OCI-LY7 (cell line): ENCODE measurements at regions of chr3 and their contacts with region 1.

Region 1: DNA sequence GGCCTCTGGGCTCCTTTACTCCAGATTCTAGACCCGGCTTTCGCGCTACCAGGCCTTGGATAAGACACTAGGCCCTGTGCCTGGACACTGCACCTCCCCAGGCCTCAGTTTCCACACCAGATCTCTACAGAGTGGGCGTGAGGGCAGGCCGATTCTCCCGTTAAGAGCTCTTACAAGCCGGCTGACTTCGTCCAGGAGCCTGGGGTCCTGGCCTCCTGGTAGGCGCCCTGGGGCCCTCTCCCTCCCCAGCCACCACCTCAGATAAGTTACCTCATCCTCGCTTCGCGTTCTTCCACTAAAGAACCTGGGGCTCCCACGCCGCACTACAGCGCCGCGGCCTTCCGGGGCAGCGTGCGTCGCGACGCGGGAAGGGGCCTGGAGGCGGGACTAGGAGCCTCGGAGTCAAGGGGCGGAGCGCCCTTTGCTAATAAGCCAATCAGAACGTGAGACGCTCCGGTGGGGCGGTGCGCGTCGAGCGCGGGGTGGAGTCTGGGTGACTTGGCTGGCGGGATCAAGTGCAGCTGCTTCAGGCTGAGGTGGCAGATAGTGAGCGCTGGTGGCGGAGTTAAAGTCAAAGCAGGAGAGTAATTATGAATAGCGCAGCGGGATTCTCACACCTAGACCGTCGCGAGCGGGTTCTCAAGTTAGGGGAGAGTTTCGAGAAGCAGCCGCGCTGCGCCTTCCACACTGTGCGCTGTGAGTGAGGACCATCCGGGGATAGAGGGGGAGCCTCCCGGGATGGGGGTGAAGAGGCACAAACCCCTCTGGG is at the starts of genes EAF2 and IQCB1:
- DNase-seq: peak; percentile 98
- H3K4me3 ChIP-seq: peak within 1 kb of the TSS; percentile 93
- H3K27ac ChIP-seq: peak within 1 kb of the TSS; percentile 83
- H3K4me1 ChIP-seq: peaks cover 58% of the 10 kb centered on the region
- CTCF ChIP-seq: peak; percentile 21; the same call in 1 of the 2 replicates
- total RNA-seq, gene EAF2: 66.3 and 78.1 TPM in 2 replicates
- total RNA-seq, gene IQCB1: 77.5 and 108 TPM in 2 replicates

Region 2: DNA sequence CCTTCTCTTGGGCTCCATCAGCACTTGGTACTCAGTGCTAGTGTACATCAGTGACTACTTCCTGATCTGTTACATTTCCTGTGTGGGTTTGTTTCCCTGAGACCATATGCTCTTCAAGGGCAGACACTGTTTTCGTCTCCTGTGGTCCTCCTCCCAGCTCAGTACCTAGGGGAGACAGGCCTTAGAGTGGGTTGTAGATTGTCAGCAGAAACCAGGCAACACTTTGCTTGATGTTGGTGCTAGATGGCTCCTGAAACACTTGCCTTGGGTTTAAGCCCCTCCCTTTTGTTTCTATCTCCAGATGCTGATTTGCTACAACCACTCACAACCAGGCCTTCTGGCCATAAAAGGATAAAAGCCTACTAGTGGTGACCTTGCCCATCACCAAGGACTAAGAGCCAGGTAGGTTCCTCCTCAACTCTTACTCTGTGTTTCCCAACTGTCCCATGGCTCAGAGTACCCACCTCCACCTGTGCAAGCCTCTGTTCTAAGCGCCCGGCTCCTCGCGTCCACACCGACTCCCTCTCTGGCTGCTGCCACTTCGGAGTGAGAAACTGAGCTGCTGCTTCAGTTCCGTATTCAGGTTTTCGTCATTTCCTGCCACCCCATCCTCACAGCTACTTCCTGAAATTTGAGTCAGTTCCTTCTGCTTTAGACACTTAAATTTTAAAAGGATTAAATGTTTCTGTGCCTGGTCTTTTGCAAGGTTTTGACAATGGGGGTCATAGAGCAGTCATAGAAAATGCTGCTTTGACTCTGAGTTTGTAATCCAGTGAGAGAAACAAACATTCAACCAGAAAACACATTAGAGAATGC is 174.3 kb before region 1 on chr3 and contains the start of gene HCLS1:
- CTCF ChIA-PET with region 1: no interaction called
- POLR2A ChIA-PET with region 1: interaction called, 4 read pairs
- intact Hi-C with region 1: loop called (anchors 5 kb)
- DNase-seq: peak; percentile 89
- H3K4me3 ChIP-seq: peak within 1 kb of the TSS; percentile 75
- H3K27ac ChIP-seq: peak within 1 kb of the TSS; percentile 82
- H3K4me1 ChIP-seq: peaks cover 28% of the 10 kb centered on the region
- CTCF ChIP-seq: 0 out of 2 replicates have a peak, but pooled peaks have one; percentile 29
- total RNA-seq, gene HCLS1: 124 and 167 TPM in 2 replicates

Region 3: DNA sequence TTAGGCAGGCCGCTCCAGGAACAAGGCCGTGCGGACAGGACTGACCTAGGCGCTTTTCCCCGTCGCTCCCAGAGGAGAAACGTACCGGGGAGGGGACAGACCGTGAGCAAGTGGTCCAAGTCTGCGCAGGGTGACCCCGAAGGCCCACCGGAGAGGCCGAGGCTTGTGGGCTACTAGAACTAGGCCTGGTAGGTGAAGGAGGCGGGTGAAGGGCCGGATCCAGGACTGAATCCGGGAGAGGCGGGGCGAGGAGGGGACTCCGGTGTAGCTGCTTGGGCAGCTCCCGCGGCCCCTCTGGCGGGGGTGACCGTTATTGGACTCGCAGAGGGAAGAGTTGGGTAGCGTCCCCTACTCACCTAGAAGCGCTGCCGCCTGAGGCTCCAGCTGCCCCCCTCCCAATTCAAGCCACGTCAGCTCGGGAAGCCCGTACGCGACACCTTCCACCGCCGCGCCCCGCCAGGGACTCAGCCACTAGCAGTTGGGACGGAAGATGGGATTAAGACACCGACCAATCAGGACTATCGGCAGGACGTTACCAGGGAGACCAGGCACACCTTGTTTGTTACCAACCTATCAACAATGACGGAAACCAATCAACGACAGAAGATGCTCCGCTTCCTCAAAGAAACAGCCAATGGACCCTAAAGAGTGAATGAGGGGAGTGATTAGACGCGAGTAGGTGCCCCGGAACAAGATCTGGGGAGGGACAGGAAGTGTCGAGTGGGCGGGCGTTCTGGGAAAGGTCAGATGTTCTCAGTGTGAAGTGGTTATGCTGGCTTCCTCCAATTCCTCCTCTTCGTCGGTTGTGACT is 85.4 kb before region 1 on chr3 and contains the start of gene GOLGB1:
- CTCF ChIA-PET with region 1: no interaction called
- POLR2A ChIA-PET with region 1: interaction called, 4 read pairs
- intact Hi-C with region 1: loop called (anchors 2 kb)
- DNase-seq: peak; percentile 99
- H3K4me3 ChIP-seq: peak within 1 kb of the TSS; percentile 79
- H3K27ac ChIP-seq: peak within 1 kb of the TSS; percentile 19
- H3K4me1 ChIP-seq: peaks cover 20% of the 10 kb centered on the region
- CTCF ChIP-seq: no peak
- total RNA-seq, gene GOLGB1: 11.5 and 15.4 TPM in 2 replicates

Region 4: GRCh38 chr3:121793078-121793477 is 41.8 kb before region 1 on chr3:
- CTCF ChIA-PET with region 1: no interaction called
- POLR2A ChIA-PET with region 1: interaction called, 46 read pairs
- intact Hi-C with region 1: loop called (anchors 1 kb)
- DNase-seq: peak; percentile 21
- H3K4me3 ChIP-seq: peak overlapping the region; percentile 49
- H3K27ac ChIP-seq: peak overlapping the region; percentile 91
- H3K4me1 ChIP-seq: peaks cover 55% of the 10 kb centered on the region
- CTCF ChIP-seq: no peak

Region 5: GRCh38 chr3:121809249-121809648 is 25.6 kb before region 1 on chr3:
- CTCF ChIA-PET with region 1: no interaction called
- POLR2A ChIA-PET with region 1: interaction called, 110 read pairs
- intact Hi-C with region 1: no loop called
- DNase-seq: peak; percentile 77
- H3K4me3 ChIP-seq: peak overlapping the region; percentile 50
- H3K27ac ChIP-seq: peak overlapping the region; percentile 92
- H3K4me1 ChIP-seq: peaks cover 53% of the 10 kb centered on the region
- CTCF ChIP-seq: no peak

Region 6: GRCh38 chr3:121817753-121818152 is 17.1 kb before region 1 on chr3:
- CTCF ChIA-PET with region 1: no interaction called
- POLR2A ChIA-PET with region 1: interaction called, 110 read pairs
- intact Hi-C with region 1: no loop called
- DNase-seq: peak; percentile 20
- H3K4me3 ChIP-seq: no peak overlapping the region
- H3K27ac ChIP-seq: peak overlapping the region; percentile 41
- H3K4me1 ChIP-seq: peaks cover 22% of the 10 kb centered on the region
- CTCF ChIP-seq: no peak

Region 7: DNA sequence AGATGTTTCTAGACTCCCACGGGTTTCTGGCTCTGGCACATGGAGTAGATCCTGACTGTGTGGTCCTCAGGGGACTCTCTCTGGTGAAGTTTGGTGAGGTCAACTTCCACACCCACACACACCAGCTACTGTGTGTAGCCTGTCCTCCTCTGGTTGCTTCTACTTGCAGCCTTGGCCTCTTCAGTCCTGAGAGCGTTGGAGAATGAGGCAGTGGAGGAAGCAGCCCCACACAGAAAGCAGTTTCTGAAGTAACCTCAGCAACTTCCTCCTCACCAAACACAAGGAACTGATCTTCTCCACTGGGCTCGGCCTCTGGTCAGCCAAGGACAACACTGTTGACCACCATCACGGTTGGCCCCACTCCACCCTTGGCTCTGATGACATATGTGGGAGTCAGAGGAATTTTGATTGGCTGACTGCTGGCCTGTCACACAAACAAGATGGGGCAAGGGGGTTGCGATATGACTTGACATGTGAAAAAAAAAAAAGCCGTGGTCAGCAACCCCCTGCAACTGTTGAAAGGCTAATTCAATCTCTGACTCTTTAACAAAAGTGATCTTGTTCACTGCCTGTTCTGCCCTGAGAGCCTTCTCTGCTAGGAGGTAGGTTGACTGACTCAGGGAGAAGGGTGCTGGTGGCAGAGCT is 239.9 kb after region 1 on chr3:
- CTCF ChIA-PET with region 1: no interaction called
- POLR2A ChIA-PET with region 1: no interaction called
- intact Hi-C with region 1: loop called (anchors 5 kb)
- DNase-seq: peak; percentile 64
- H3K4me3 ChIP-seq: peak overlapping the region; percentile 71
- H3K27ac ChIP-seq: peak overlapping the region; percentile 81
- H3K4me1 ChIP-seq: peaks cover 69% of the 10 kb centered on the region
- CTCF ChIP-seq: no peak